Left lung (tissue), 14 donors: ENCODE measurements at regions of chr9 and their contacts with region 1.

Region 1: GRCh38 chr9:126401109-126401508 is 74.5 kb downstream of the MVB12B start:
- DNase-seq: no peak
- ATAC-seq: no peak
- H3K4me3 ChIP-seq: no peak overlapping the region
- H3K27ac ChIP-seq: no peak overlapping the region
- H3K4me1 ChIP-seq: peaks cover 0 to 13% of the 10 kb centered on the region in 2 donors
- H3K27me3 ChIP-seq: no peaks in the 10 kb centered on the region
- CTCF ChIP-seq: no peak

Region 2: GRCh38 chr9:126317513-126317912 is 83.6 kb before region 1 on chr9:
- intact Hi-C with region 1: loop called in 1 of 2 experiments (anchors 5 kb)
- DNase-seq: no peak
- ATAC-seq: peak; percentile 80
- H3K4me3 ChIP-seq: no peak overlapping the region
- H3K27ac ChIP-seq: no peak overlapping the region
- H3K4me1 ChIP-seq: no peaks in the 10 kb centered on the region
- H3K27me3 ChIP-seq: no peaks in the 10 kb centered on the region
- CTCF ChIP-seq: peak; percentile 29 to 37

Region 3: GRCh38 chr9:126456441-126457174 is 55.5 kb after region 1 on chr9:
- intact Hi-C with region 1: no loop called
- DNase-seq: no peak
- ATAC-seq: no peak
- H3K4me3 ChIP-seq: no peak overlapping the region
- H3K27ac ChIP-seq: no peak overlapping the region
- H3K4me1 ChIP-seq: no peaks in the 10 kb centered on the region
- H3K27me3 ChIP-seq: no peaks in the 10 kb centered on the region
- CTCF ChIP-seq: no peak

Region 4: GRCh38 chr9:126471084-126471624 is 70.0 kb after region 1 on chr9:
- intact Hi-C with region 1: no loop called
- DNase-seq: peak in 2 of 4 donors; percentile 86 to 92
- ATAC-seq: peak; percentile 84
- H3K4me3 ChIP-seq: no peak overlapping the region
- H3K27ac ChIP-seq: peak overlapping the region; percentile 49 to 89
- H3K4me1 ChIP-seq: peaks cover 0 to 68% of the 10 kb centered on the region in 2 donors
- H3K27me3 ChIP-seq: no peaks in the 10 kb centered on the region
- CTCF ChIP-seq: no peak